K562 (cell line): ENCODE measurements at regions of chr10 and their contacts with region 1.

Region 1: GRCh38 chr10:86585037-86585725 is 63.6 kb upstream of the WAPL start:
- DNase-seq: peak; percentile 70 to 83 (median 76)
- ATAC-seq: peak; percentile 97
- H3K4me3 ChIP-seq: no peak overlapping the region
- H3K27ac ChIP-seq: no peak overlapping the region
- H3K4me1 ChIP-seq: no peaks in the 10 kb centered on the region
- H3K27me3 ChIP-seq: peaks cover 0 to 7% of the 10 kb centered on the region in 2 experiments; a peak in 1 of 5 replicates
- CTCF ChIP-seq: peak; percentile 78 to 81 (median 80)
- EP300 ChIP-seq: no peak
- POLR2A ChIP-seq: no peak
- RAD21 ChIP-seq: peak; percentile 77 to 86

Region 2: GRCh38 chr10:86355571-86356038 is 229.6 kb before region 1 on chr10:
- CTCF ChIA-PET with region 1: no interaction called
- POLR2A ChIA-PET with region 1: no interaction called
- in situ Hi-C with region 1: no loop called
- intact Hi-C with region 1: no loop called
- DNase-seq: no peak
- ATAC-seq: no peak; the same call in 2 of the 3 replicates
- H3K4me3 ChIP-seq: no peak overlapping the region
- H3K27ac ChIP-seq: no peak overlapping the region
- H3K4me1 ChIP-seq: no peaks in the 10 kb centered on the region
- H3K27me3 ChIP-seq: peaks cover 0 to 6% of the 10 kb centered on the region in 2 experiments; a peak in 2 of 5 replicates
- CTCF ChIP-seq: no peak
- EP300 ChIP-seq: no peak
- POLR2A ChIP-seq: no peak
- RAD21 ChIP-seq: no peak

Region 3: DNA sequence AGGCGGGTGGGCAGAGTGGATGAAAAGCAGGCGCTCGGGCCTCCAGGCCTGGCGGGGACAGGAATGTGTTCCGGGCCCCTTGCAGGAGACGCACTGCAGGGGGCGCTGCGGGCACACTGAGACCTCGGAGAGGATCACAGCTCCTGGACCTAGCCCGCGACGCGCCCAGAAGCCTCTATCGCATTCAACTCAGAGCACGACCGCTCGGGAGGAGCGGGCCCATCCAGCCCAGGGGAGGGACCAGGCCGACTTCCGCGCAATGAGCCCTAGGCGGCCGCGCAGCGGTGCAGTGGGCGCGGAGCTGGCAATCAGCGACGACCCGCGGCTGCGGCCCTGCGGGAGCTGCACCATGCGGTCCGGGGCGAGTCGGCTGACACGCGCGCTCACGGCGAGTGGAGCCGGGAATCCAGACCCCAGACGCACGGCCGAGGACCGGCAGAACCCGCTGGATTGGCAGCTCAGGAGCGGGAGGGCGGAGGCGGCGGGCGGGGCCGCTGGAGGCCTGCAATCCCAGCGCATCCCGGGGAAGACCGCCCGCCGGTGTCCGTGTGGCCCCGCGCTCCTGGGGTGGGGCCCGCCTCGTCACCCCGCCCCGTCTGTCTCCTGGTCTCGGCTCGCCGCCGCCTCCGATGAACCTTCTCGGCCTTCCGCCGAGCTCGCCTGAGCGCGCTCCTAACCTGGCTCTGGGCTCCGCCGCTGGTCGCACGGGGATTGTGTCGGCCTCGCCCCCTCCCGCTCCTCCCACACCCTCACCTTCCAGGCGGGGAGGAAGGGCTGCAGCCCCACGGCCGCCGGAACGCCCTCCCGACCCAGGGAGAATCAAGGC is 185.1 kb before region 1 on chr10:
- CTCF ChIA-PET with region 1: interaction called, 6 read pairs
- POLR2A ChIA-PET with region 1: interaction called, 5 read pairs
- in situ Hi-C with region 1: loop called (anchors 5 kb)
- intact Hi-C with region 1: loop called (anchors 1 kb)
- DNase-seq: peak; percentile 77 to 92 (median 82)
- ATAC-seq: peak; percentile 99
- H3K4me3 ChIP-seq: peak overlapping the region; percentile 49
- H3K27ac ChIP-seq: no peak overlapping the region
- H3K4me1 ChIP-seq: peaks cover 0 to 21% of the 10 kb centered on the region in 2 experiments; a peak in 2 of 5 replicates
- H3K27me3 ChIP-seq: peaks cover 4 to 29% of the 10 kb centered on the region in 2 experiments; a peak in 3 of 5 replicates
- CTCF ChIP-seq: peak; percentile 81 to 84 (median 83)
- EP300 ChIP-seq: no peak
- POLR2A ChIP-seq: no peak
- RAD21 ChIP-seq: peak; percentile 59 to 80

Region 4: DNA sequence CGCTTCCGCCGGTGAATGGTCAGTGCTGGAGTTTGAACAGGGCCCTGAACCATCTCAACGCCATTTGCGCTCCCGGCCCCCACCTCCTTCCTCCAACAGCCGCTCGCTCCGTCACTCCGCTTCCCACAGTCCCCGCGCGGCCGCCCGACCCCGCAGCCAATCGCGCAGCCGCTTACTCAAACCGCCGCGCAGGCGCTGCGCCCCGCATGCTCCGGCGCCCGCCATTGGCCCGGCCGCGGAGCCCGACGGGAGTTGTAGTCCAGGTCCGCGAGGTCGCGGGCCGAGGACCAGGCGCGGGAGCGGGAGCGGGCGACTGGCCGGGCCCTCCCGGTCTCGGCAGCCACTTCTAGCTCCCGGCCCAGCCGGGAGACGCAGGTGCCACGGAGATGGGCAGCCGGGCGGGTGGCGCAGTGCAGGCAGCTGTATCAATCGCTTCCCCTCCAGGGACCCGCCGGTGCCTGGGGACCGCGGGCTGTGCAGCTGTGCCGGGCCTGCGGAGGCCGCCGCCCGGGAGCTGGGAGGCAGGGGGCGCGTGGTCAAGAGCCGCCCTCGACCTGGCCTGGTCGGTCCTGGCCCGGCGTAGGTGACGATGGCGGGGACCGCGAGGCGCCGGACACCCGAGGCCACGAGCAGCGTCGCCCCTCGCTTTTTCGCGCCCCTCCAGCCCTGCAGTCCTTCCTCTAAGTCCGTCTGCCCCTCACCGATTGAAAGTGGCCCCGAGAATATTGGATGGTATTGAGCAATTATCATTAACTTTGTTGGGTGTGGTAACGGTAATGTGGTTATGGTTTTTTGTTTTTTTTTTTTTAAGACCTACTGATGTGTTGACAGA is 63.3 kb before region 1 on chr10 and contains the start of gene WAPL:
- CTCF ChIA-PET with region 1: interaction called, 7 read pairs
- POLR2A ChIA-PET with region 1: no interaction called
- in situ Hi-C with region 1: loop called (anchors 5 kb)
- intact Hi-C with region 1: loop called (anchors 1 kb)
- DNase-seq: peak; percentile 92 to 96 (median 94)
- ATAC-seq: peak; percentile 96
- H3K4me3 ChIP-seq: peak within 1 kb of the TSS; percentile 92
- H3K27ac ChIP-seq: peak within 1 kb of the TSS; percentile 88
- H3K4me1 ChIP-seq: peaks cover 8 to 10% of the 10 kb centered on the region in 2 experiments; a peak in 2 of 5 replicates
- H3K27me3 ChIP-seq: no peaks in the 10 kb centered on the region
- CTCF ChIP-seq: no peak
- EP300 ChIP-seq: no peak
- POLR2A ChIP-seq: peak; percentile 71
- RAD21 ChIP-seq: no peak
- polyA plus RNA-seq, gene WAPL: 14.3 to 21.9 TPM

Region 5: DNA sequence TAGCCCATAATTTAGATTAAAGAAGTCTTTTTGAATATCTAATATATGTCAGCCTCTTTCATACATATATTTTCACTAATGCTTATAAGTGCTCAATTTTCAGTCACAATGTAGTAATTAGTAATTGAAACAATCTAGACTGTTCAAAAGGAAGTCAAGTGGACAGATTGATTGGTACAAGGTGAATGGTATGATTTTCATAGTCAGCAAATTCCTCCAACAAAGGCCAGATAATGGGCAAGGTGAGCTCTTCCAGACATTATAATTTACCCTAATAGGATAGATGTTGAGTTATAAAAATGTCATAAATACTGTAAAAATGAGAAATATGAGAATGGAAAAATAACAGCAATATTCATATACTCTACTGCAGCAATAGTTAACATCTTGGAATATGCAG is 24.7 kb after region 1 on chr10:
- CTCF ChIA-PET with region 1: no interaction called
- POLR2A ChIA-PET with region 1: no interaction called
- in situ Hi-C with region 1: no loop called
- intact Hi-C with region 1: no loop called
- DNase-seq: no peak
- ATAC-seq: no peak
- H3K4me3 ChIP-seq: no peak overlapping the region
- H3K27ac ChIP-seq: no peak overlapping the region
- H3K4me1 ChIP-seq: no peaks in the 10 kb centered on the region
- H3K27me3 ChIP-seq: no peaks in the 10 kb centered on the region
- CTCF ChIP-seq: no peak
- EP300 ChIP-seq: no peak
- POLR2A ChIP-seq: no peak
- RAD21 ChIP-seq: no peak